ENCODE measurements at regions of chr2 and their contacts with region 1.

Region 1: GRCh38 chr2:15577071-15577735 is 14.5 kb upstream of the DDX1 start:
- DNase-seq: peak; percentile 82 to 92 (median 87)
- H3K4me3 ChIP-seq: no peak overlapping the region
- H3K27ac ChIP-seq: no peak overlapping the region
- H3K4me1 ChIP-seq: peaks cover 0 to 4% (median 0%) of the 10 kb centered on the region in 4 experiments
- H3K27me3 ChIP-seq: no peaks in the 10 kb centered on the region

Region 2: GRCh38 chr2:15560988-15561573 is 16.1 kb before region 1 on chr2 and contains the start of gene NBAS:
- CTCF ChIA-PET with region 1: interaction called, 13 read pairs
- POLR2A ChIA-PET with region 1: interaction called, 3 read pairs
- DNase-seq: peak; percentile 81 to 86 (median 85)
- H3K4me3 ChIP-seq: peak within 1 kb of the TSS; percentile 84 to 99 (median 92)
- H3K27ac ChIP-seq: peak within 1 kb of the TSS; percentile 74 to 89
- H3K4me1 ChIP-seq: peaks cover 9 to 32% (median 22%) of the 10 kb centered on the region in 4 experiments
- H3K27me3 ChIP-seq: no peaks in the 10 kb centered on the region

Region 3: DNA sequence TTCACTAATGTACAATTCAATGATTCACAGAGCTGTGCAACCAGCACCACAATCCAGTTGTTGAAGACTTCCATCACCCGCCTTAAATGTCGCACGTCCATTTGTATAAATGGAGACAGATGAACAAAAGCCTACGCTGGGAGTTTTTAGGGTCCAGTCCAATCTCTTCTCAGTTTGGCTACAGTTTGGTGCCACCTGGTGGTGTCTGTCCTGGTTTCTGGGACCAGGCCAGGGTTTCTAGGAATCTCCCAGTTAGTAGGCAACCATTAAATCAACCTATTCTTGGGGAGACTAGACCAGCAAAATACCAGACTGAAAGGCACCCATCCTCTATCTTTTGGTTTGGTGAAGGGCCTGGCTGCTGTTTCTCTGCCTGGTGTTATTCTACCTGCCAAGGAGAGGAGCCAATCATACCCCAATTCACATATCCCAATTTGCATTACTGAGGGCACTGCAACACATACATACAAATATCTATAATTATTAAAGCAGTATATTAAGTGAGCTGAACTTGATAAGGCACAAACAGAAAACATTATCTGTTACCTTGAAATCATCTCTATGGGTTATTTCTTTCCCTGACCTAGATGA is 11.2 kb after region 1 on chr2:
- CTCF ChIA-PET with region 1: interaction called, 51 read pairs
- POLR2A ChIA-PET with region 1: no interaction called
- DNase-seq: peak; percentile 50 to 69 (median 59)
- H3K4me3 ChIP-seq: no peak overlapping the region
- H3K27ac ChIP-seq: no peak overlapping the region
- H3K4me1 ChIP-seq: peaks cover 3 to 21% (median 14%) of the 10 kb centered on the region in 4 experiments
- H3K27me3 ChIP-seq: no peaks in the 10 kb centered on the region

Measured in common myeloid progenitor, CD34-positive (primary cell).